WTC11 (cell line): ENCODE measurements at regions of chr4 and their contacts with region 1.

Region 1: GRCh38 chr4:158496030-158496741 is 25.5 kb upstream of the RXFP1 start:
- DNase-seq: peak; percentile 85
- ATAC-seq: peak; percentile 89
- H3K4me3 Mint-ChIP-seq: no peak overlapping the region
- H3K27ac Mint-ChIP-seq: no peak overlapping the region
- H3K4me1 Mint-ChIP-seq: no peaks in the 10 kb centered on the region; the same call in 1 of the 2 replicates
- H3K27me3 Mint-ChIP-seq: no peaks in the 10 kb centered on the region
- CTCF ChIP-seq: peak; percentile 76

Region 2: GRCh38 chr4:158459085-158459820 is 36.9 kb before region 1 on chr4:
- CTCF ChIA-PET with region 1: interaction called, 11 read pairs
- POLR2A ChIA-PET with region 1: no interaction called
- DNase-seq: no peak
- ATAC-seq: peak; percentile 80
- H3K4me3 Mint-ChIP-seq: no peak overlapping the region
- H3K27ac Mint-ChIP-seq: no peak overlapping the region
- H3K4me1 Mint-ChIP-seq: no peaks in the 10 kb centered on the region
- H3K27me3 Mint-ChIP-seq: no peaks in the 10 kb centered on the region
- CTCF ChIP-seq: no peak

Region 3: GRCh38 chr4:158484173-158484885 is 11.9 kb before region 1 on chr4:
- CTCF ChIA-PET with region 1: interaction called, 12 read pairs
- POLR2A ChIA-PET with region 1: no interaction called
- DNase-seq: no peak
- ATAC-seq: no peak
- H3K4me3 Mint-ChIP-seq: no peak overlapping the region
- H3K27ac Mint-ChIP-seq: no peak overlapping the region
- H3K4me1 Mint-ChIP-seq: no peaks in the 10 kb centered on the region
- H3K27me3 Mint-ChIP-seq: no peaks in the 10 kb centered on the region; the same call in 1 of the 2 replicates
- CTCF ChIP-seq: no peak

Region 4: DNA sequence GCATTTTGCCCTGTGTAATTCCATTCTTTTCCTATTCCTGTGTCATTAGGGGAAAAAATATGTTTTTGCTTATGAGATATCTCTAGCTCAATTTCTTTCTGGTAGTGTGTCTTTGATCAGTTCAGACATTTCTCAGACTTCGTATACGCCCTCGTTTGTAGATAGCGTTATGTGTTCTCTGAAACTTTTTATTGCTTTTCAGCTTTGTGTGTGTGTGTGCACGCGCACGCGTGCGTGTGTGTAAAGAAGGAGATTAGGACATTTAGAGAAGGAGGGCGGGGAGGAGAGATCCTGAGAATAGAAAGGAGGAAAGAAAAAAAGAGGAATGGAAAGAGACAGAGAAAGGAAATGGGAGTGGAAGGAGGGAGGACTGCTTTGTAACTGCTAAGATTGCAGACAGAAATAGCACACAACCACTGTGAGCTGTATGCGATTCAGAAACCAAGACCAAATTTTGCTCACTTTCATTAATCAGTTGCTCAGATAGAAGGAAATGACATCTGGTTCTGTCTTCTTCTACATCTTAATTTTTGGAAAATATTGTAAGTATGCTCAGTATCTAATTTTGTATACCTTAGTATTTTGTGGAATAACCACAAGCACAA is 25.4 kb after region 1 on chr4 and contains the start of gene RXFP1:
- CTCF ChIA-PET with region 1: interaction called, 10 read pairs
- POLR2A ChIA-PET with region 1: no interaction called
- DNase-seq: no peak
- ATAC-seq: no peak
- H3K4me3 Mint-ChIP-seq: no peak within 1 kb of the TSS
- H3K27ac Mint-ChIP-seq: no peak within 1 kb of the TSS
- H3K4me1 Mint-ChIP-seq: peaks cover 10% of the 10 kb centered on the region
- H3K27me3 Mint-ChIP-seq: no peaks in the 10 kb centered on the region
- CTCF ChIP-seq: no peak
- total RNA-seq, gene RXFP1: 0.48 to 0.89 TPM (median 0.82 TPM) in 3 replicates

Region 5: GRCh38 chr4:158580064-158580463 is 83.9 kb after region 1 on chr4:
- CTCF ChIA-PET with region 1: interaction called, 10 read pairs
- POLR2A ChIA-PET with region 1: no interaction called
- DNase-seq: peak; percentile 35
- ATAC-seq: peak; percentile 98
- H3K4me3 Mint-ChIP-seq: no peak overlapping the region
- H3K27ac Mint-ChIP-seq: no peak overlapping the region
- H3K4me1 Mint-ChIP-seq: peaks cover 40% of the 10 kb centered on the region
- H3K27me3 Mint-ChIP-seq: peaks cover 47% of the 10 kb centered on the region
- CTCF ChIP-seq: no peak

Region 6: GRCh38 chr4:158624889-158625478 is 128.8 kb after region 1 on chr4:
- CTCF ChIA-PET with region 1: interaction called, 15 read pairs
- POLR2A ChIA-PET with region 1: no interaction called
- DNase-seq: no peak
- ATAC-seq: peak; percentile 82
- H3K4me3 Mint-ChIP-seq: no peak overlapping the region
- H3K27ac Mint-ChIP-seq: no peak overlapping the region
- H3K4me1 Mint-ChIP-seq: peaks cover 10% of the 10 kb centered on the region
- H3K27me3 Mint-ChIP-seq: no peaks in the 10 kb centered on the region
- CTCF ChIP-seq: peak; percentile 63